IMR-90 (cell line): ENCODE measurements at regions of chr13 and their contacts with region 1.

Region 1: DNA sequence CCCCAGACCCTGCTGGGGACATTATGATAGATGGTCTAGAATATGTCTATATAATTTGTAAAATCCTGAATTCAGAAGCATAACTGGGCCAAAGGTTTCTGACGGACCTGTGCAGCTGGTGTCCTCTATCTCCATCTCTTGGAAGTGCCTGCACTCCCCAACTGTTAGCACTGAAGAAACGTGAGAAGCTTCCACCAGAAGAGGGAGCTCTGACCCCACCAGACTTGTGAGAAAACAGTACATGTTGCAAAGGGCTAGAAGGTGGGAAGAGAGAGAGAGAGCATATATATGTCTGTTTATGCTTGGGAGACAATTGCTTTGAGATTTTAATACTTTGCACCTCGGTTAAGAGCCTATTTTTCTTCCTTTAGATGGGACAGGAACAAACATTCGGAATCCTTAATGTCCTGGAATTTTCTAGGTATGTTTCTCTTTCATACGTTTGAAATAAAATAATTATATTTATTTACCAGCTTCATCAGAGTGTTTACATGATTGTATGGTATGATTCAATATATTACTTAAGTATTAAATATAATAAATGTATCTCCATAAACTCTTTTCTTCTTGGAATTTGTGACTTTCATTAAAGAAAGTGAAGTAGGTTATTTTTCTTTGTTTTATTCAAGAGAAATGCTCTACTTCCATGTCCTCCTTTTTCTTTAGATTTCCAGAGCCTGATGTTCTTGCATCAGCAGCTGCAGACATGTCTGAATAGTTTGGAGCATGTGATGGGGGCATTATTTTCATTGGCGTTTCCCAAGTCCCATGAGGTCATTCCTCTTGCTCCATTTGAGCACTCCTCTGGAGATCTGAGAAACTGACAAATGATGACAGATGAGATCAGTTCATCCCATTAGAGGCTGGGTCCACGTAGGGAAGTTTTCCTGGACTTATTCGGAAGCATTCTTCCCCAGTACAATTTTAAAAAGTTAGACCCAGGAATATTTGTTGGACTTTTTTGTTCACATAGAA is 202.9 kb downstream of the ATP8A2 start:
- DNase-seq: peak; percentile 78
- ATAC-seq: peak; percentile 96
- H3K4me3 ChIP-seq: no peak overlapping the region
- H3K27ac ChIP-seq: no peak overlapping the region
- H3K4me1 ChIP-seq: no peaks in the 10 kb centered on the region
- H3K27me3 ChIP-seq: no peaks in the 10 kb centered on the region
- CTCF ChIP-seq: peak; percentile 79
- POLR2A ChIP-seq: no peak
- RAD21 ChIP-seq: peak; percentile 83

Region 2: GRCh38 chr13:25585000-25585399 is 10.3 kb after region 1 on chr13:
- CTCF ChIA-PET with region 1: interaction called, 10 read pairs
- POLR2A ChIA-PET with region 1: no interaction called
- dilution Hi-C with region 1: no loop called
- in situ Hi-C with region 1: no loop called
- intact Hi-C with region 1: no loop called
- DNase-seq: no peak
- ATAC-seq: no peak
- H3K4me3 ChIP-seq: no peak overlapping the region
- H3K27ac ChIP-seq: no peak overlapping the region
- H3K4me1 ChIP-seq: no peaks in the 10 kb centered on the region
- H3K27me3 ChIP-seq: no peaks in the 10 kb centered on the region
- CTCF ChIP-seq: no peak
- POLR2A ChIP-seq: no peak
- RAD21 ChIP-seq: no peak

Region 3: DNA sequence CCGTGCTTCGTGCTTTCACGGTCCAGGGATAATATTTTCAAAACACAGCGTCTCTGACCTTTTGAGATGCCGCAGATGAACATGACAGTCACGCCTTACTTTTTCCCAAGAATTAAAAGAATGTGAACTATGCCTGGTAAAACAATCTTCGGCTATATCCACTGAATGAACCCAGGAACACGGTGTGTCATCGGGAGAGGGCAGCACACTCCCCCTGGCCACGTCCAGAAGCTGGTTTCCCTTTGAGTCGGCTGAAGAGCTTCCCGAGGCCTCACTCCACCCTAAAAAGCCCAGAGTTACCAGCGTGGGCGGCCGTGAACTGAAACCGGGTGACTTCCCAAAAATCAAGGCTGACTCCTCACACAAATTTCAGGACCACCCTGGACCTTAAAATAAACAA is 500.0 kb after region 1 on chr13:
- CTCF ChIA-PET with region 1: interaction called, 3 read pairs
- POLR2A ChIA-PET with region 1: no interaction called
- dilution Hi-C with region 1: no loop called
- in situ Hi-C with region 1: no loop called
- intact Hi-C with region 1: loop called (anchors 1 kb)
- DNase-seq: peak; percentile 14
- ATAC-seq: peak; percentile 82
- H3K4me3 ChIP-seq: no peak overlapping the region
- H3K27ac ChIP-seq: no peak overlapping the region
- H3K4me1 ChIP-seq: no peaks in the 10 kb centered on the region
- H3K27me3 ChIP-seq: peaks cover 1% of the 10 kb centered on the region; the same call in 1 of the 2 replicates
- CTCF ChIP-seq: 0 out of 2 replicates have a peak, but pooled peaks have one; percentile 9
- POLR2A ChIP-seq: no peak
- RAD21 ChIP-seq: no peak